CD8-positive, alpha-beta memory T cell (primary cell): ENCODE measurements at regions of chr1 and their contacts with region 1.

Region 1: DNA sequence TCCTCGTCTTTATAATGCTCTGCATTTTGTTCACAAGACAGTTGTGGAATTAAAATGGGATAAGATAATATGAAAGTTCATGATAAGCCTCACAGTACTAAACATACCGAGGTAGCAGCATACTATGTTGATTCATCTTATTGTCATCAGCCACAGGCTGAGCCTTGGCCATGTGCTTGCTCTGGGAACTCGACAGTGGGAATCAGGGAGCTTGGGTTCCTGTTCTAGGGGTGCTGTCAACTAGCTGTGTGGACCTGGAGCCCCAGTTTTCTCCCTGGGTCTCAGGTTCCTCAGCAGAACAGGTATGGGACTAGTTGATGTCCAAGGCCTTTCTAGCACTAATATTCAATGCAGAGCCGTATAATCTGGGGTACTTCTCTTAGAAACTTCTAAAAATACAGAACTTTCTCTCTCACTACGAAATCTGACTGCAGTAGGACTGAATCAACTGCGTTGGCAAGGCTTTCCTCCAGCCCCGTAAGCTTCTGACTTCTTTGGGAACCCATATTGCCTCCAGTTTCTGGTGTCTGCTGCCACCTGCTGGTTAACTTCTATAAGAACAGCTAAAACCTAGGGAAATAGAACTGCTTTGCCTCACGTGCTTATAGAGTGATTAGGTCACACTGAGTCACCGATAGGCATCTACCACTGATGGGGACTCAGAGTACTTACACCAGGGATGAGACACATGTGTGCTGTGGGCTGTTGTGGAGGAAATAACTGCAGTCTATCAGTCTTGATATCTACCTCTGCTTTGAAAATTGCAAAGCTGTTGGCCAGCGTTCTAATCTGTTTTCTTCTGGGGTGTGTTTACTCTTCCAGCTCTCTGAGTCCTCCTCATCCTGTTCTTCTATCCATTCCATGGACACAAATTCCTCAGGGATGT is 110.9 kb downstream of the RGL1 start:
- DNase-seq: peak; percentile 43 to 81 (median 68)
- H3K4me3 ChIP-seq: no peak overlapping the region
- H3K4me3 Mint-ChIP-seq: peak overlapping the region in 6 of 7 donors; percentile 19 to 53 (median 49)
- H3K27ac ChIP-seq: no peak overlapping the region
- H3K27ac Mint-ChIP-seq: peak overlapping the region in 7 of 8 donors; percentile 29 to 81 (median 52)
- H3K4me1 ChIP-seq: peaks cover 7% of the 10 kb centered on the region
- H3K4me1 Mint-ChIP-seq: peaks cover 11 to 13% (median 11%) of the 10 kb centered on the region in 3 donors
- H3K27me3 ChIP-seq: no peaks in the 10 kb centered on the region
- H3K27me3 Mint-ChIP-seq: no peaks in the 10 kb centered on the region

Region 2: GRCh38 chr1:183655562-183656075 is 260.2 kb before region 1 on chr1:
- CTCF ChIA-PET with region 1: interaction called, 69 read pairs
- POLR2A ChIA-PET with region 1: interaction called, 3 read pairs
- DNase-seq: peak; percentile 48 to 77 (median 63)
- H3K4me3 ChIP-seq: no peak overlapping the region
- H3K4me3 Mint-ChIP-seq: no peak overlapping the region
- H3K27ac ChIP-seq: no peak overlapping the region
- H3K27ac Mint-ChIP-seq: no peak overlapping the region
- H3K4me1 ChIP-seq: peaks cover 24% of the 10 kb centered on the region
- H3K4me1 Mint-ChIP-seq: peaks cover 20 to 36% (median 35%) of the 10 kb centered on the region in 3 donors
- H3K27me3 ChIP-seq: no peaks in the 10 kb centered on the region
- H3K27me3 Mint-ChIP-seq: peaks cover 0 to under 1% of the 10 kb centered on the region in 2 donors

Region 3: DNA sequence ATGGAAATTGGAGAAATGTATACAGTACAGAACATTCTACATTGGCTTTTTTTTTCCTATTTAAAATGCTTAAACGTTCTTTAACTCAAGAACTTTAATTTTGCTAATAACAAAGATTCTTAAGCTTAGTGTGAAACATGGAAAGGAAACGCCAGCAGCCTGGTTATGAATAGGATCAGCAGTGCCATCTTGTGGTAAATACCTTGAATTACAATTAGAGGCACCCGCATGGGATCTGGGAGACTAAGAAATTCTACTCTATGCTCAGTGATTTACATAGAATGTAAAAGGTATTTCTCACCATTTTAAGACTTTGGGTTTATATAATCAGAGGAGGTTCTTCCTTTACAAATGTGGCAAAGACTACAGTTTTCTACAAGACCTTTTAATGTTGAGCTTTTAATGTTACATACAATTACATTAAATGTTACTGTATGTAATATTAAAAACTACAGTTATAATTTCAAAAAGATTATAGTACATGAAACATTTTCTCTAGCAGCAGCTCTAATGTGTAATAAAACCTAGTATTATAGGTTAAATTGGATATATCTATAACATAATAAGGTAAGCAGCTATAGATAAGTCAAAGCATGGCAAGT is 230.7 kb before region 1 on chr1:
- CTCF ChIA-PET with region 1: interaction called, 29 read pairs
- POLR2A ChIA-PET with region 1: no interaction called
- DNase-seq: peak in 2 of 5 donors; percentile 28 to 39
- H3K4me3 ChIP-seq: no peak overlapping the region
- H3K4me3 Mint-ChIP-seq: no peak overlapping the region
- H3K27ac ChIP-seq: no peak overlapping the region
- H3K27ac Mint-ChIP-seq: no peak overlapping the region
- H3K4me1 ChIP-seq: no peaks in the 10 kb centered on the region
- H3K4me1 Mint-ChIP-seq: peaks cover 0 to 3% (median 0%) of the 10 kb centered on the region in 3 donors
- H3K27me3 ChIP-seq: no peaks in the 10 kb centered on the region
- H3K27me3 Mint-ChIP-seq: peaks cover 20 to 41% of the 10 kb centered on the region in 2 donors

Region 4: GRCh38 chr1:183891158-183891856 is 24.6 kb before region 1 on chr1:
- CTCF ChIA-PET with region 1: interaction called, 17 read pairs
- POLR2A ChIA-PET with region 1: no interaction called
- DNase-seq: no peak
- H3K4me3 ChIP-seq: no peak overlapping the region
- H3K4me3 Mint-ChIP-seq: no peak overlapping the region
- H3K27ac ChIP-seq: no peak overlapping the region
- H3K27ac Mint-ChIP-seq: no peak overlapping the region
- H3K4me1 ChIP-seq: peaks cover 32% of the 10 kb centered on the region
- H3K4me1 Mint-ChIP-seq: peaks cover 32 to 39% (median 39%) of the 10 kb centered on the region in 3 donors
- H3K27me3 ChIP-seq: no peaks in the 10 kb centered on the region
- H3K27me3 Mint-ChIP-seq: no peaks in the 10 kb centered on the region

Region 5: DNA sequence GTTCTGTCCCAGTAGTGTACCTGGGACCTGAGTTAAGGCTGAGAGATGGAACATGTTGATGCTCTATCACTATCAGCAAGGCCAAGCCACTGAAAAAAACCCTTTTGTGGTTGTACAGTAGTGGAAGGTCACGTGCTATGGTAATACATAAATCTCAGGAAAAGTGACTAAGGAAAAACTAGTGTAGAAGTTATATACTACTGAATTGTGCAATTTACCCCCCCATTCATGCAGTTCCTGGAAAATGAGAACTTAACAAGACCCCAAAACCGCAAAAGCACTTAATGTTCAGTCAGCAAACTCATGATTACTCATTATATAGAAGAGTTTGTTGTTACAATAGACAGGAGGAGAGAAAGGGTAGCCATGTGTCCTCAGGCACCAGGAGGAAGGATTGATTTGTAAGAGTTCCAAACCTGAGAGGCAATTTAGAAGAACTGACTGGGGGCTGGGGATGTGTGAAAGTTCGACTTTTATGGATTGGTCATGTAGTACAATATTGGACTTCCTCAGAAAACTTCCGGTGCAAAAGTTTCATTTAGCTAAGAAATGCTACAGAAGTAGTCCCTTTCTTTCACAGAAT is 19.3 kb before region 1 on chr1:
- CTCF ChIA-PET with region 1: interaction called, 12 read pairs
- POLR2A ChIA-PET with region 1: no interaction called
- DNase-seq: no peak
- H3K4me3 ChIP-seq: no peak overlapping the region
- H3K4me3 Mint-ChIP-seq: no peak overlapping the region
- H3K27ac ChIP-seq: no peak overlapping the region
- H3K27ac Mint-ChIP-seq: no peak overlapping the region
- H3K4me1 ChIP-seq: no peaks in the 10 kb centered on the region
- H3K4me1 Mint-ChIP-seq: peaks cover 0 to 7% (median 0%) of the 10 kb centered on the region in 3 donors
- H3K27me3 ChIP-seq: no peaks in the 10 kb centered on the region
- H3K27me3 Mint-ChIP-seq: no peaks in the 10 kb centered on the region

Region 6: DNA sequence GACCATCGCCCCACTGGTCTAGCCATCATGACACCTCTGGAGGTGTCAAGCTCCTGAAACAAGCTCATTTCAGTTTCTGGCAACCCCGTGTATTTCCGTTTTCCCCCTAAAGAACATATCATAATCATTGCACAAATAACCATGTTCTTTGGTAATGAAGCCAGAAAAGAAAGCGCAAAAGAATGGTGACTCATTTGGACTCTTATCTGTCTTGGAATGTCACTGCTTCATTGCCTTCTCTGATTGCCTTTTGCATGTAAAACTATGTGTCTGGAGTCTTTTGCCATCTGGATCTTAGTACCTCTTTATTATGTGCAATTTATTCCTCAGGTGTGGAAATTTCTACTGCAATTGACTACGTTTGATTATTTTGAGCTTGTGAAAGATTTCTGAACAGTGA is 11.1 kb after region 1 on chr1:
- CTCF ChIA-PET with region 1: interaction called, 19 read pairs
- POLR2A ChIA-PET with region 1: no interaction called
- DNase-seq: no peak
- H3K4me3 ChIP-seq: no peak overlapping the region
- H3K4me3 Mint-ChIP-seq: no peak overlapping the region
- H3K27ac ChIP-seq: no peak overlapping the region
- H3K27ac Mint-ChIP-seq: no peak overlapping the region
- H3K4me1 ChIP-seq: no peaks in the 10 kb centered on the region
- H3K4me1 Mint-ChIP-seq: peaks cover 0 to 2% (median 0%) of the 10 kb centered on the region in 3 donors
- H3K27me3 ChIP-seq: no peaks in the 10 kb centered on the region
- H3K27me3 Mint-ChIP-seq: peaks cover 0 to 6% of the 10 kb centered on the region in 2 donors

Region 7: GRCh38 chr1:183932412-183932811 is 16.5 kb after region 1 on chr1:
- CTCF ChIA-PET with region 1: interaction called, 19 read pairs
- POLR2A ChIA-PET with region 1: no interaction called
- DNase-seq: no peak
- H3K4me3 ChIP-seq: no peak overlapping the region
- H3K4me3 Mint-ChIP-seq: no peak overlapping the region
- H3K27ac ChIP-seq: no peak overlapping the region
- H3K27ac Mint-ChIP-seq: no peak overlapping the region
- H3K4me1 ChIP-seq: no peaks in the 10 kb centered on the region
- H3K4me1 Mint-ChIP-seq: peaks cover 0 to 2% (median 0%) of the 10 kb centered on the region in 3 donors
- H3K27me3 ChIP-seq: no peaks in the 10 kb centered on the region
- H3K27me3 Mint-ChIP-seq: peaks cover 0 to 5% of the 10 kb centered on the region in 2 donors